CD8-positive, alpha-beta memory T cell (primary cell): ENCODE measurements at regions of chr6 and their contacts with region 1.

Region 1: DNA sequence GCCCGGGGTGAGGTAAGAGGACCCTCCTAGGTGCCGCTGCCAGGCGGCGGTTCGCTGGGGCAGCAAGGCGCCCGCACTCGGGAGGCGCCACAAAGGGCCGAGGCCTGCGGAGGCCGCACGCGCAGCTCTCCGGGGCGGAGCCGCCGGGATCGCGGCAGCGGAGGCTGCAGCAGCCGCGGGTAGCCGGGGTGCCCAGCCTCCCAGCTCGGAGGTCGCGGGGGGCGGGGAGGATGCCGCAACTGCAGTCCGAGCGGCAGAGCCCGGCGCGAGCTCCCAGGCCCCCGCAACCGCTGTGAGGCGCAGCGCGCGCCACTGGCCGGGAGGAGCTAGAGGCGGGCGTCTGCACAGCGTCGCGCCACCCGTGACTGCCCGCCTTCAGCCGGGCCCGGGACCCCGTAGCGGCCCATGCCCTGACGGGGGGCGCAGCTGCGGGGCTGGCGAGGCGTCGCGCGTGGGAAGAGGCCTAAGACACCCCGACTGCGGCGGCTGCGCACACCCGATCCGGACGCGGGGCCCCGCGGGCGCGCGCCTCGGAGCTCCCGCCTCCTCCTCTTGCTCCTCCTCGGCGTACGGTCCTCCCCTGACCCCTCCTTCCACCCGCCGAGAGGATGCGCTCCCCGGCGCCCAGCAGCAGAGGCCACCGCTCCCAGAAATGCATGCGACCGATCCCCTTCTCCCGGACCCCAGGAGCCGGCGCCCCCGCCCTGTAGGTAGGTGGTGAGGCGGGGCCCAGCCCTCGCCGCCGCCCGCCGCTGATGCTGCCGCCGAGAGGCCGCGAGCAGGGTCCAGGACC is at the start of gene NCOA7:
- DNase-seq: peak; percentile 71 to 87 (median 80)
- H3K4me3 ChIP-seq: peak within 1 kb of the TSS; percentile 71
- H3K4me3 Mint-ChIP-seq: peak within 1 kb of the TSS; percentile 93 to 100 (median 95)
- H3K27ac ChIP-seq: peak within 1 kb of the TSS; percentile 84
- H3K27ac Mint-ChIP-seq: peak within 1 kb of the TSS; percentile 97 to 100 (median 98)
- H3K4me1 ChIP-seq: peaks cover 41% of the 10 kb centered on the region
- H3K4me1 Mint-ChIP-seq: peaks cover 52 to 67% (median 58%) of the 10 kb centered on the region in 3 donors
- H3K27me3 ChIP-seq: no peaks in the 10 kb centered on the region
- H3K27me3 Mint-ChIP-seq: peaks cover 0 to 1% of the 10 kb centered on the region in 2 donors
- total RNA-seq, gene NCOA7: 54.7 to 62.5 TPM

Region 2: DNA sequence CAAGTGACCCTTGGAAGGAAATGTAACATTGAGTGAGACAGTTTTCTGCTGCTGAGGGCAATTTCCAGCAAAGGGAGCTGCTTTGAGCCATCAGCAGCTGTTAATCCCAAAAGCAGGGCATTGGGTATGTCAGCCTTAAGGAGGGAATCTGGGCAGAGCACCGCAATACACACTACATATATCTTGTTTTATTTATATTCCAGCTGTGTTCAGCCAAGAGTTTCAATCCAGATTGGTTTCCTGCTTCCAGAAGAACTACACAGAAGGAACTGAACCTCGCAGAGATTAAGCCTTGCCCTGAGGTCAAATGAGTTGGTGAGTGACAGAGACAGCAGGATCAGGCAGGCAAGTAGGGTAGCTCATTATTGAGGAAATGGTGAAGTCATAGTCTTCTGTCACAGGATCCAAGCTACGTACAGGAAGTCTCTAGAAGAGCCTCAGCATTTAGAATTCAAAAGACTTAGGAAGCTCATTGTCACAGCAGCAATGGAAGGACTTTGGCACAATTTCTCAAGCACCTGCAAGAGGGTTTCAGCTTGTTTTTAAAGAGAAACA is 151.0 kb before region 1 on chr6:
- CTCF ChIA-PET with region 1: no interaction called
- POLR2A ChIA-PET with region 1: no interaction called
- DNase-seq: no peak
- H3K4me3 ChIP-seq: no peak overlapping the region
- H3K4me3 Mint-ChIP-seq: no peak overlapping the region
- H3K27ac ChIP-seq: no peak overlapping the region
- H3K27ac Mint-ChIP-seq: no peak overlapping the region
- H3K4me1 ChIP-seq: no peaks in the 10 kb centered on the region
- H3K4me1 Mint-ChIP-seq: no peaks in the 10 kb centered on the region
- H3K27me3 ChIP-seq: no peaks in the 10 kb centered on the region
- H3K27me3 Mint-ChIP-seq: peaks cover 4 to 8% of the 10 kb centered on the region in 2 donors

Region 3: DNA sequence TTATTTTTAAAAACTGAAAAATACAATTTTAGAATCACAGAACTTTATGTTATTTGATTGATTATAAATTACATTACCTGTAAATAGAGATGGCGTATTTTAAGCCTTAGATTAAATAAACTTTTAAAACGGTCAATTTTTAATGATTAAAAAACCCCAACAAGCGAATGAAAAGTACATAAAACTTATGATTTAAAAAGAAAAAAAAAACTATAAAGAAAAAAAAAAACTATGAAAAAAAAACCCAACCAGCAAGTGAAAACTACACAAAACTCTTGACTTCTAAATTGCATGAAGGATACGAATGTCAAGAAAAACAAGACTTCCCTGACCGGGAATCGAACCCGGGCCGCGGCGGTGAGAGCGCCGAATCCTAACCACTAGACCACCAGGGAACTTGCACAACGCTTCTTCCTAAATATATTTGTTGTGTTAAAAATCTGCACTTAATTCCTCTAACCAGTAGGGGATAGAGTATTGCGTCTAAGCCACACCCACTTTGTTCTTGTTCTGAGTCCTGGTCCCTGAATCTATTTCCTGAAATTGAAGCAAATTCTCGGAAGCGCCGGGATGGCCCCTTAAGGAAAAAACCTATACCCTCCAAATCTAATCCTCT is 10.5 kb before region 1 on chr6:
- CTCF ChIA-PET with region 1: interaction called, 78 read pairs
- POLR2A ChIA-PET with region 1: interaction called, 188 read pairs
- DNase-seq: peak; percentile 75 to 94 (median 90)
- H3K4me3 ChIP-seq: peak overlapping the region; percentile 86
- H3K4me3 Mint-ChIP-seq: no peak overlapping the region
- H3K27ac ChIP-seq: peak overlapping the region; percentile 94
- H3K27ac Mint-ChIP-seq: no peak overlapping the region
- H3K4me1 ChIP-seq: peaks cover 17% of the 10 kb centered on the region
- H3K4me1 Mint-ChIP-seq: peaks cover 0 to 11% (median 10%) of the 10 kb centered on the region in 3 donors
- H3K27me3 ChIP-seq: no peaks in the 10 kb centered on the region
- H3K27me3 Mint-ChIP-seq: no peaks in the 10 kb centered on the region

Region 4: GRCh38 chr6:125824946-125825771 is 34.6 kb after region 1 on chr6:
- CTCF ChIA-PET with region 1: interaction called, 40 read pairs
- POLR2A ChIA-PET with region 1: interaction called, 32 read pairs
- DNase-seq: no peak
- H3K4me3 ChIP-seq: no peak overlapping the region
- H3K4me3 Mint-ChIP-seq: no peak overlapping the region
- H3K27ac ChIP-seq: no peak overlapping the region
- H3K27ac Mint-ChIP-seq: peak overlapping the region in 3 of 8 donors; percentile 25 to 62 (median 41)
- H3K4me1 ChIP-seq: peaks cover 21% of the 10 kb centered on the region
- H3K4me1 Mint-ChIP-seq: peaks cover 45 to 69% (median 65%) of the 10 kb centered on the region in 3 donors
- H3K27me3 ChIP-seq: no peaks in the 10 kb centered on the region
- H3K27me3 Mint-ChIP-seq: no peaks in the 10 kb centered on the region

Region 5: DNA sequence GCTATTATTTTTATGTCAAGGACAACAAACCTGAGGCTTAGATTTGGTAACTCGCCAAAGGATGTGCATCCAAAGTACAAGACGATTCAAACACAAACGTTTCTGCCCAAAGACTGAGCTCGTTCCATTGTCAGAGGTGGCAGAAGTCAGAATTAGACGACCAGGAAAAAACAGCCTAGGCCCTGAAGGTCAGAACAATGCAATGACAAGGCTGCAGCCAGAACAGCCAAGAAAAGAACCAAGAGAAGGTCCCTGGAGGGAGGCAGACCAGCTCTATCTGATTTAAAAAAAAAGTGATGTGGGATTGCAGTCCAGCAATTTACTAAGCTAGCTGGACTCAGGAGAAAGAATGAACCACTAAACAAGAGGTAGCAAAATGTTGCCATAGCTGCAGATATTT is 54.4 kb after region 1 on chr6:
- CTCF ChIA-PET with region 1: interaction called, 12 read pairs
- POLR2A ChIA-PET with region 1: interaction called, 3 read pairs
- DNase-seq: no peak
- H3K4me3 ChIP-seq: no peak overlapping the region
- H3K4me3 Mint-ChIP-seq: no peak overlapping the region
- H3K27ac ChIP-seq: no peak overlapping the region
- H3K27ac Mint-ChIP-seq: no peak overlapping the region
- H3K4me1 ChIP-seq: no peaks in the 10 kb centered on the region
- H3K4me1 Mint-ChIP-seq: peaks cover 17 to 42% (median 37%) of the 10 kb centered on the region in 3 donors
- H3K27me3 ChIP-seq: no peaks in the 10 kb centered on the region
- H3K27me3 Mint-ChIP-seq: no peaks in the 10 kb centered on the region

Region 6: GRCh38 chr6:125906158-125906998 is 115.8 kb after region 1 on chr6:
- CTCF ChIA-PET with region 1: interaction called, 26 read pairs
- POLR2A ChIA-PET with region 1: interaction called, 4 read pairs
- DNase-seq: peak; percentile 11 to 57 (median 20)
- H3K4me3 ChIP-seq: no peak overlapping the region
- H3K4me3 Mint-ChIP-seq: no peak overlapping the region
- H3K27ac ChIP-seq: no peak overlapping the region
- H3K27ac Mint-ChIP-seq: peak overlapping the region in 7 of 8 donors; percentile 10 to 81 (median 35)
- H3K4me1 ChIP-seq: no peaks in the 10 kb centered on the region
- H3K4me1 Mint-ChIP-seq: peaks cover 18 to 25% (median 19%) of the 10 kb centered on the region in 3 donors
- H3K27me3 ChIP-seq: no peaks in the 10 kb centered on the region
- H3K27me3 Mint-ChIP-seq: peaks cover 0 to 3% of the 10 kb centered on the region in 2 donors

Region 7: GRCh38 chr6:125956506-125957390 is 166.2 kb after region 1 on chr6 and contains the start of gene HINT3:
- CTCF ChIA-PET with region 1: interaction called, 103 read pairs
- POLR2A ChIA-PET with region 1: interaction called, 46 read pairs
- DNase-seq: peak; percentile 95 to 98 (median 97)
- H3K4me3 ChIP-seq: peak within 1 kb of the TSS; percentile 57
- H3K4me3 Mint-ChIP-seq: no peak within 1 kb of the TSS
- H3K27ac ChIP-seq: peak within 1 kb of the TSS; percentile 95
- H3K27ac Mint-ChIP-seq: no peak within 1 kb of the TSS
- H3K4me1 ChIP-seq: peaks cover 29% of the 10 kb centered on the region
- H3K4me1 Mint-ChIP-seq: peaks cover 10 to 18% (median 12%) of the 10 kb centered on the region in 3 donors
- H3K27me3 ChIP-seq: no peaks in the 10 kb centered on the region
- H3K27me3 Mint-ChIP-seq: peaks cover 2 to 6% of the 10 kb centered on the region in 2 donors
- total RNA-seq, gene HINT3: 12.1 to 12.8 TPM

Region 8: DNA sequence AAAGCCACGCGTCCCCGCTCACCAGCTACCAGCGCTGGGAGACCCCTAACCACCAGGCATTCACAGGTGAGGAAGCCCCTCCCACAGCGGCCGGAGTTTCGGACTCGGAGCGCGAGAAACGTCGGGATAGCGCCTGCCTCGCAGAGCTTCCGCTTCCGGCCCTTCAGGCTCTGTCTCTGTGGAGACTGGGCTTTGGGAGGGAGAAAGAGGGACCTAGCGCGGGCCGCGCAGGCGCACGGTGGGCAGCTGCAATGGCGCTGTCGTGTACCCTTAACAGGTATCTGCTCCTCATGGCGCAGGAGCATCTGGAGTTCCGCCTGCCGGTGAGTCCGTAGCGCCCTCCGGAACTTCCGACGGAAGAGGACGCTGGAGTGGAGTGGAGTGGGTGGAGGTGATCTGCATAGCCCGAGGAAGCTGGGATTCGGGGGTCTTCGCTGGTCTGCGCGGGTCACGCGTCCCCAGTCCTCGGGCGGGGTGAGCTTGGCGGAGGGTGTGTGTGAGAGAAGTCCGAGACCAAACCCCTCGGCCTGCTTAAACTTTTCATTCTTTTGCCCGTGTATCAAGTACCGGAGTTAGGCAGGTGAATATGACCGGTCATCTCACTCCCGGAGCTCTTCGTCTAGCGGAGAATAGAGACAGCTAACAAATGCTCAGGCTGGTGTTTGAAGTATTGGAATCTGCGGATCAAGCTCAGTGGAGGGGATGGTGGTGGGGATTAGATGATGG is 195.9 kb after region 1 on chr6 and contains the start of gene TRMT11:
- CTCF ChIA-PET with region 1: interaction called, 23 read pairs
- POLR2A ChIA-PET with region 1: interaction called, 37 read pairs
- DNase-seq: peak; percentile 72 to 91 (median 82)
- H3K4me3 ChIP-seq: peak within 1 kb of the TSS; percentile 92
- H3K4me3 Mint-ChIP-seq: peak within 1 kb of the TSS in 6 of 7 donors; percentile 5 to 54 (median 33)
- H3K27ac ChIP-seq: peak within 1 kb of the TSS; percentile 87
- H3K27ac Mint-ChIP-seq: peak within 1 kb of the TSS in 1 of 8 donors; percentile 5
- H3K4me1 ChIP-seq: peaks cover 34% of the 10 kb centered on the region
- H3K4me1 Mint-ChIP-seq: peaks cover 9 to 15% (median 13%) of the 10 kb centered on the region in 3 donors
- H3K27me3 ChIP-seq: no peaks in the 10 kb centered on the region
- H3K27me3 Mint-ChIP-seq: no peaks in the 10 kb centered on the region
- total RNA-seq, gene TRMT11: 35.8 to 37.9 TPM